ENCODE measurements at regions of chr2 and their contacts with region 1.

Region 1: GRCh38 chr2:27016801-27017325 is 15.9 kb upstream of the TMEM214 start:
- DNase-seq: peak in 8 of 9 experiments; percentile 21 to 64 (median 53)
- ATAC-seq: peak; percentile 54
- H3K4me3 ChIP-seq: no peak overlapping the region
- H3K4me3 Mint-ChIP-seq: no peak overlapping the region
- H3K27ac ChIP-seq: no peak overlapping the region
- H3K27ac Mint-ChIP-seq: no peak overlapping the region
- H3K4me1 ChIP-seq: no peaks in the 10 kb centered on the region
- H3K4me1 Mint-ChIP-seq: no peaks in the 10 kb centered on the region
- H3K27me3 ChIP-seq: no peaks in the 10 kb centered on the region
- H3K27me3 Mint-ChIP-seq: no peaks in the 10 kb centered on the region
- CTCF ChIP-seq: peak; percentile 47

Region 2: DNA sequence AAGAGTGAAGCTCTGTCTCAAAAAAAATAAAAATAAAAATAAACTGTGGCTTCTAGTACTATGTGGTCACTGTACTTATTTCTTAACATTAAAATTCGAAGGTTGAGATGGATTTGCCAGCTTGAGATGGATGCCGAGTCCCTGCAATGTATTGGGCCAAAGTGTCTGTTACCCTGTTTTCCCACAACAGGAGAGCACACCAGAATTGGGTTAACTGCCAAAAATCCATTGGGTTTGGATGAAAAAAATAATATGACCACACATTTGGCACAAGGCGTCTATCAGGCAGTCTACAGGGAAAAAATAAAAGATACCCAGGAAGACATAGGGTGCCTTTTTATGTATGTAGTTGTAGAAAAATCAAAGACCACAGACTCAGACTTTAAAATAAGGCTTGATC is 65.6 kb before region 1 on chr2:
- CTCF ChIA-PET with region 1: interaction called, 12 read pairs
- POLR2A ChIA-PET with region 1: no interaction called
- intact Hi-C with region 1: no loop called
- DNase-seq: no peak
- ATAC-seq: no peak
- H3K4me3 ChIP-seq: no peak overlapping the region
- H3K4me3 Mint-ChIP-seq: no peak overlapping the region
- H3K27ac ChIP-seq: no peak overlapping the region
- H3K27ac Mint-ChIP-seq: no peak overlapping the region
- H3K4me1 ChIP-seq: no peaks in the 10 kb centered on the region
- H3K4me1 Mint-ChIP-seq: no peaks in the 10 kb centered on the region
- H3K27me3 ChIP-seq: peaks cover 0 to 5% of the 10 kb centered on the region in 2 experiments
- H3K27me3 Mint-ChIP-seq: peaks cover 21% of the 10 kb centered on the region
- CTCF ChIP-seq: no peak

Region 3: GRCh38 chr2:26970244-26970920 is 46.5 kb before region 1 on chr2 and contains the start of gene MAPRE3:
- CTCF ChIA-PET with region 1: interaction called, 131 read pairs
- POLR2A ChIA-PET with region 1: no interaction called
- intact Hi-C with region 1: no loop called
- DNase-seq: peak; percentile 60 to 95 (median 84)
- ATAC-seq: peak; percentile 85
- H3K4me3 ChIP-seq: peak within 1 kb of the TSS; percentile 58 to 65
- H3K4me3 Mint-ChIP-seq: peak within 1 kb of the TSS; percentile 83
- H3K27ac ChIP-seq: peak within 1 kb of the TSS in 1 of 2 experiments; percentile 49
- H3K27ac Mint-ChIP-seq: peak within 1 kb of the TSS; percentile 37
- H3K4me1 ChIP-seq: peaks cover 9% of the 10 kb centered on the region
- H3K4me1 Mint-ChIP-seq: peaks cover 25% of the 10 kb centered on the region
- H3K27me3 ChIP-seq: no peaks in the 10 kb centered on the region
- H3K27me3 Mint-ChIP-seq: peaks cover 19% of the 10 kb centered on the region
- CTCF ChIP-seq: no peak
- total RNA-seq, gene MAPRE3: 2.6 to 3.8 TPM

Region 4: DNA sequence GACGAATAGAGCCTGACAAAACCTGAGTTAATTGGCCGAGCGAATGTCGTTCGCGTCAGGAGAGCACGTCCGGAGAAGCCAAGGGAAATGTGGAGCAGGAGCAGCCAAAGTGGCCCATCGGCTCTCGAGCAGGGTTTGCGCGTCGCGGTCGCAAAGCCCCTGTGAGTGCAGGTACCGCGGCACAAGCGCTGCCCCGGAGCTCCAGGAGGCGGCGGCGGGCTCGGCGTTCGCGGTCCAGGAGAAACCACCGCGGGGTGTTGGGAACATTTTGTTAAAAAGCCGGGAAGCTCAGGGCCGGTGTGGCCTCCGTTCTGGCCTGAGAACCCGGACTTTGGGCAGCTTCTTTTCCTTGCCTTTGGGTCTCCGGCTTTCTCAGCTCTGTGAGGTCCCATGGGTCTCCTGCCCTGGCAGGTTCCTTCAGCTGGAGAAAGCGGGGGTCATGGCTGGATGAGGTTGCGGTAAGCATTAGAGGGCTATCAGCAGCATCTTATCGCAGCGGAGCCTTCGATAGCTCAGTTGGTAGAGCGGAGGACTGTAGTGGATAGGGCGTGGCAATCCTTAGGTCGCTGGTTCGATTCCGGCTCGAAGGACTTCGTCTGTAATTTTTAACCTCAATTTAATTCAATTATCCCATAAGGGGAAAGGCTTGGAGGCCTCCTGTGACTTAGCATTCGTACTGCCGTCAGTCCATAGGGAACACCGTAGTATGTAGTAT is 33.6 kb after region 1 on chr2:
- CTCF ChIA-PET with region 1: no interaction called
- POLR2A ChIA-PET with region 1: no interaction called
- intact Hi-C with region 1: no loop called
- DNase-seq: peak; percentile 85 to 97 (median 93)
- ATAC-seq: peak; percentile 64
- H3K4me3 ChIP-seq: peak overlapping the region; percentile 78 to 83
- H3K4me3 Mint-ChIP-seq: peak overlapping the region; percentile 99
- H3K27ac ChIP-seq: peak overlapping the region; percentile 74 to 88
- H3K27ac Mint-ChIP-seq: peak overlapping the region; percentile 99
- H3K4me1 ChIP-seq: peaks cover 10% of the 10 kb centered on the region
- H3K4me1 Mint-ChIP-seq: peaks cover 9% of the 10 kb centered on the region
- H3K27me3 ChIP-seq: no peaks in the 10 kb centered on the region
- H3K27me3 Mint-ChIP-seq: peaks cover 2% of the 10 kb centered on the region
- CTCF ChIP-seq: peak; percentile 28

Region 5: DNA sequence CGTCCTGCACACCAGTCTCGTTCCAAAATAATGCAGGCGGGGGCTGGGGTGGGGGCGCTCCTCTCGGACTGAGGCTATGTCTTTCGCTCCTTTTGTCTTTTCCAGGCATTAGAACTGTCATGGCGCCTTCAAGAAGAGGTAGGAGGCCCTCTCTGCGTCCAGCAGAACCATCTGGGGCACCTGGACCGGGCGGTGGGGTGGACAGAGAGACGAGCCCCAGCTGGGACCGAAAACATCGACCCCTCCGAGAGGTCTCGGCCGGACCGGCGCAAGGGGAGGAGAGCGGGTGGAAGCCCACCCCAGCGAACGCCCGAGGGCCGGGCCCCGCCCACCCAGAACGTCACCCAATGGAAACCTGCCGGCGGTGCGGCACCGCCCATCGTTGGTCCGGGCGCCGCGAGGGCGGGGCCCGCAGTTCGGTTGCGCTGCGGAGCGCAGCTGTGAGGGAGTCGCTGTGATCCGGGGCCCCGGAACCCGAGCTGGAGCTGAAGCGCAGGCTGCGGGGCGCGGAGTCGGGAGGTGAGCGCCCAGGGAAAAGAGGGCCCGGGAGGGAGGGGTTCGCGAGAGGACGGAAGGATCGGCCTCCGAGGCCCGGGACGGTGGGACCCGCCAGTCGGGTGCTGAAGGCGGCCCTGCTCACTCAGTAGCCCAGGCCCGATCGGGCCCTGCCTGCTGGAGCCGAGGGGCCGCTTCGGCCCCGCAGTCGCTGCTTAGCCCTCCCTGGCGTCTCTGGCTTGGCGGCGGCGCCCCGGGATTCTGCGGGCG is 411.5 kb after region 1 on chr2 and contains the start of gene NRBP1:
- CTCF ChIA-PET with region 1: no interaction called
- POLR2A ChIA-PET with region 1: no interaction called
- intact Hi-C with region 1: no loop called
- DNase-seq: peak; percentile 80 to 95 (median 91)
- ATAC-seq: peak; percentile 91
- H3K4me3 ChIP-seq: peak within 1 kb of the TSS; percentile 81 to 92
- H3K4me3 Mint-ChIP-seq: peak within 1 kb of the TSS; percentile 97
- H3K27ac ChIP-seq: peak within 1 kb of the TSS; percentile 79 to 90
- H3K27ac Mint-ChIP-seq: peak within 1 kb of the TSS; percentile 97
- H3K4me1 ChIP-seq: peaks cover 29% of the 10 kb centered on the region
- H3K4me1 Mint-ChIP-seq: peaks cover 38% of the 10 kb centered on the region
- H3K27me3 ChIP-seq: no peaks in the 10 kb centered on the region
- H3K27me3 Mint-ChIP-seq: no peaks in the 10 kb centered on the region
- CTCF ChIP-seq: no peak
- total RNA-seq, gene NRBP1: 192 to 196 TPM